Activated CD8-positive, alpha-beta memory T cell treated with anti-CD3 and anti-CD28 coated beads, Interleukin-2, amount 10 ng/mL, durations not matched to agents 7 days and 5 days (primary cell): ENCODE measurements at regions of chr9 and their contacts with region 1.

Region 1: DNA sequence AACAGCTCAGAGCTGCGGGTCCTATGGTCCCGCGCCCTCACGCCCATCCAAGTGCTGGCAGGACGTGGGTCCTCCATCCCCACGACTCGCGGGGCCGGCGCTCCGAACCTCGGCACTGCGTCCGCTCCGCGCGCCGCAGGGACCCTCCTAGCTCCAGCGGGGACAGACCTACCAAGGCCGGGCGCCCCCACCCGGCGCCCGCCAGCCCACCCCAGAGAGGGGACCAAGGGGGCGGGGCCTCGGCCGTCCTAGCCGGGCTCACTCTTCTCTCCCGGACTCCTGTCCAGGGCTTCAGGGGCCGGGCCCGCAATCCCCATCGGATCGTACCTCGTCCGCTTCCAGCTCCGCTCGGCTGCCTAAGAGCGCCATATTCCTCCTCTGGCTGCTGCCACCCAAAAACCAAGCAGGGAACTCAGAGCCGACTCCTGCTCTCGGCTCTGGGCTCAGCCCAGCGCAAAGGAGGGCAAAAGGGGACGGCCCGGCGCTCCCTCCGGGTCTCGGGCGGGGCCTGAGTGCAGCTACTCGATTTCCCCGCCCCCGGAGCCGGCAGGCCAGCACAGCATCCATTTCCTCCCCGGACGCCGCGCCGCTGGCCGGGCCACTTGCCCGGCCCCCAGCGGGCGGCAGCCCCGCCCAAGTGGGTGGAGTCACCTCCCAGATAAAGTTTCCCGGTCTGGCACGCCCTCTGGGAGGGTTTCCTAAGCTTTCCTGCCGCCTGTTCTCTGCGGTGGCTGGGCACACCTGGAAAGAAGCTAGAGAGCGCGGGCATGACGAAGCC is at the start of gene TTC39B:
- DNase-seq: peak; percentile 92
- ATAC-seq: peak; percentile 93
- H3K4me3 Mint-ChIP-seq: peak within 1 kb of the TSS; percentile 99
- H3K27ac Mint-ChIP-seq: peak within 1 kb of the TSS; percentile 97
- H3K4me1 Mint-ChIP-seq: peaks cover 43% of the 10 kb centered on the region
- H3K27me3 Mint-ChIP-seq: no peaks in the 10 kb centered on the region
- total RNA-seq, gene TTC39B: 16.2 to 34.3 TPM

Region 2: DNA sequence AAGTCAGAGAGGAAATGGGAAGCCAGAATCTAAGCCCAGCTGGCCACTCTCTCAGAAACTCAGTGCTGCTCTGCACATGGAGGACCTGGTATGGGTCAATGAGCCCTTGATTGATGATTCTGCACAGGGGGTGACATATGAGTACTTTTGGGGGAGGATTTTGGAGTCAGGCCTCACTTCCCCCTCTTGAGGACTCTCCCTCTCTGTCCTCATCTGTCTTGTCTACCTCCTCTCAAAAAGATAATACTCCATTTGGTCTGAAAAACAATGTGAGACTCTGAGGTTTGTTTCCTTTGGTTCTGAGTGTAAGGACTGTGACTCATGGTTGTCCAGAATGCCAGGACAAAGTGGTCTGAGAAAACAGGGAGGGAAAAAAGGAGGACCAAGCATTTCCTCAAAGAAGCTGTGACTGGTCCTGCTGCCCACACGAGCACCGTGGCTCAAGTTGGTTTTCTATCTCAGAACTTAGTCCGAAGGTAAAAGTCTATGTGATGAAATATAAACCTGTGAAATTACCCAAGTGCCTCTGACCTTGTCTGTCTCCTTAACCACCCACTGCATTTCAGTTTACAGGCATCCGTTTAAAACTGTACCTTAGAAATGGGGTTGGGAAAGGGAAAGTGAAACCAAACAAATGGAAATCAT is 11.1 kb before region 1 on chr9:
- CTCF ChIA-PET with region 1: interaction called, 46 read pairs
- DNase-seq: peak; percentile 55
- ATAC-seq: peak; percentile 43
- H3K4me3 Mint-ChIP-seq: peak overlapping the region; percentile 71
- H3K27ac Mint-ChIP-seq: peak overlapping the region; percentile 97
- H3K4me1 Mint-ChIP-seq: peaks cover 76% of the 10 kb centered on the region
- H3K27me3 Mint-ChIP-seq: no peaks in the 10 kb centered on the region